ENCODE measurements at regions of chr15 and their contacts with region 1.

Region 1: DNA sequence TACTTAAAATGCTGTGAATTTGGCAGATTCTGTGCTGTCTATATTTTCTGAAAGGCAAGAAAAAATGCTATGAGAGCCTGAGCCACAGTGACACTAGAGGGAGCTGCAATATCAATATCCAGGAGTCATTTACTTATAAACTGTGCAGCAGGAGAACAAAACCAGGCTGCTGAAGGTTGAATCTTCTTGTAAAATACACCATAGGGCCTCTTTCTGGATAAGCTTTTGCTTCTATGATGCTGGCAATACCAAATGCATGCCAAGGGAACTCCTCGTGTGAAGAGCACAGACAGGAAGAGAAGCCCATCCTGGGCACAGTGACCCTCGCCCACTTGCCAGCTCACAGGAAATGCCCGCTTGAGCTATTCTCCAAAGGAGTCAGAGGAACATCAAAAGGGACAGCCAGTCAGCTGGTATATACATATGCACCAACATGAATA is 48.0 kb upstream of the TSPAN3 start:
- DNase-seq: peak; percentile 82
- H3K4me3 ChIP-seq: no peak overlapping the region
- H3K27ac ChIP-seq: peak overlapping the region; percentile 21
- H3K4me1 ChIP-seq: peaks cover 21% of the 10 kb centered on the region
- H3K27me3 ChIP-seq: no peaks in the 10 kb centered on the region

Region 2: DNA sequence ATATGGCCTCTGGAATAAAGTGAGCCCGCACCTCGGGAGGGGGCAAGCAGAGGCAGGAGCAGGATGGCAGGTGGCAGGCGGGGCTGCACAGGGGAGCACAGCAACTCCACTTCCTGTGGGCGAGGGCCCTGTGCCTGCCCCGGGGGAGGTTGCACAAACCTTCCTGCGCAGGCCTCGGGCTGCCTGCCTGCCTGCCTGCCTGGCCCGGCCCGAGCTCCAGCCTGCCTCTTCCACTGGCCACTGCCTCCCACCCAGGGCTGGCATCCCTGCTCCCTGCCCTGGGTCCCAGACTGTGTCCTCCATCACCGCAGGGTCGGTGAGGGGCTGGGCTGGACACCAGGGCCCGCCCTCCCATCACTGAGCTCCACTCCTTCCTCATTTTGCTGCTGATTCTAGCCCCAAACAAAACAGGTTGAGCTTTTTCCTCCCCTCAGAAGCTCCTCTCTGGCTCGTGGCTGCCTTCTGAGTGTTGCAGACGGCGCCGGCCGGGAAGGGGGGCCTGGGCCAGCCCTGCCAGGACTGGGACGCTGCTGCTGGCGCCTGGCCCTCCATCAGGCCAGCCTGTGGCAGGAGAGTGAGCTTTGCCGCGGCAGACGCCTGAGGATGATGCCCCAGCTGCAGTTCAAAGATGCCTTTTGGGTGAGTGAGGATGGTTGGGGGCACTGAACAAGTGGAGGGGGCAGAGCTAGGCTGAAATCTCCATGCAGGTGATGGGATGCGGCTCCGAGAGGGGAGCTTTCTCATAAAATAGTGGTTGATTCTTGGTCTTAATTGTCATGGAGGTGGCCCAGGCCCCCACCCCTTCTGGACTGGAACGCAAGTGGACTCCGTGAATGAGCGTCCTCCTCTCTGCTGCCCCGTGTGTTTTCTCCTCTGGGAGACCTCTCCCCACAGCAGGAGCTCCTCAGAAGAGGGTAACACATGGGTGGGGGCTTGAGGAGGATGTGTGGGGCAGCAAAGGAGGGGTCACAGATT is 123.6 kb before region 1 on chr15 and contains the start of gene PSTPIP1:
- in situ Hi-C with region 1: no loop called
- DNase-seq: peak; percentile 66
- H3K4me3 ChIP-seq: no peak within 1 kb of the TSS
- H3K27ac ChIP-seq: no peak within 1 kb of the TSS
- H3K4me1 ChIP-seq: peaks cover 13% of the 10 kb centered on the region
- H3K27me3 ChIP-seq: no peaks in the 10 kb centered on the region
- total RNA-seq, gene PSTPIP1: 0.38 TPM in 1 of 2 replicates, not detected in the other

Region 3: DNA sequence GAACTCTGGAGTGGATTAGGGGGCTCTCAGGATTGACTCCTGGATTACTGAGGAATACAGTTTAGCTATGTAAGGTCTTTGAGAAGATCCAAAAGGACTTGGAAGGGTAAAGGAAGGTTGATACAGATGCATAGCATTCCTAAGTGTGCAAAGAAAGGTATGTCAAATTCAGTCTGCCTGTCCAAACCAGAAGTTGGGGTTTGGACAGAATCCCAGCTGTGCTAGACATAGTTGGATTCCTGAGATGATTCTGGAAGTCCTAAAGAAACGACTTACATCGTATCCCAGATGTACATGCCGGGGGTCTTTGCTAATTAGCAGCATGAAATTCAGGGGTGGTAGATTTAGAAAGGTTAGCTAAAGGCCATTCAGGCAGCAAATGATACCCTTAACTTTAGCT is 49.7 kb after region 1 on chr15:
- in situ Hi-C with region 1: no loop called
- DNase-seq: no peak
- H3K4me3 ChIP-seq: no peak overlapping the region
- H3K27ac ChIP-seq: no peak overlapping the region
- H3K4me1 ChIP-seq: peaks cover 15% of the 10 kb centered on the region; the same call in 1 of the 2 replicates
- H3K27me3 ChIP-seq: no peaks in the 10 kb centered on the region

Region 4: DNA sequence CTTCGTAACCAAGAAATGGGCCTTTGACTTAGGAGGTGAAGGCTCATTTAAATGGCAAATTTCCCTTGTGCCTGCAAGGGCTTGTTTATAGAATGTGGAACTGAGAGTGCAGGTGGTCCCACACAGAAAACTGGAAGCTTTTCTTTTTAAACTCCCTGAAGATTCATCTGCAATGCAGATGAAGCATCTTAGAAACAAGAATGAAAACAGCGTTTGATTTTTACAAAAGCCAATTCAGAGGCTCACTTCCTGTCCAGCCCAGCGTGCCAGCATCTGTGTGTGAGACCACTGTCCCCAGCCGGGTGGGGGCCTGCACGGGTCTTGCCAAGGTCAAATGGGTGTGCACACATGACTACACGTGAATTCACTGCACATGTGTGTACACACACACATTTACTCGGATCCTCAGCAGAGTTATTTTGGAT is 419.1 kb after region 1 on chr15:
- in situ Hi-C with region 1: loop called (anchors 10 kb)
- DNase-seq: no peak
- H3K4me3 ChIP-seq: no peak overlapping the region
- H3K27ac ChIP-seq: no peak overlapping the region
- H3K4me1 ChIP-seq: peaks cover 13% of the 10 kb centered on the region
- H3K27me3 ChIP-seq: no peaks in the 10 kb centered on the region; the same call in 1 of the 2 replicates

Measured in GM23248 (cell line).